HEK293 (cell line): ENCODE measurements at regions of chr12 and their contacts with region 1.

Region 1: GRCh38 chr12:8108808-8109398 is 14.5 kb upstream of the CLEC4A start:
- H3K4me3 ChIP-seq: no peak overlapping the region
- H3K27ac ChIP-seq: no peak overlapping the region
- H3K4me1 ChIP-seq: no peaks in the 10 kb centered on the region
- CTCF ChIP-seq: peak; percentile 78

Region 2: GRCh38 chr12:8088574-8088973 is 20.3 kb before region 1 on chr12:
- CTCF ChIA-PET with region 1: interaction called, 13 read pairs
- POLR2A ChIA-PET with region 1: no interaction called
- H3K4me3 ChIP-seq: no peak overlapping the region
- H3K27ac ChIP-seq: no peak overlapping the region
- H3K4me1 ChIP-seq: peaks cover 2% of the 10 kb centered on the region; the same call in 1 of the 2 replicates
- CTCF ChIP-seq: no peak

Region 3: GRCh38 chr12:8120072-8120713 is 11.3 kb after region 1 on chr12:
- CTCF ChIA-PET with region 1: interaction called, 35 read pairs
- POLR2A ChIA-PET with region 1: no interaction called
- H3K4me3 ChIP-seq: no peak overlapping the region
- H3K27ac ChIP-seq: no peak overlapping the region
- H3K4me1 ChIP-seq: no peaks in the 10 kb centered on the region
- CTCF ChIP-seq: no peak

Region 4: DNA sequence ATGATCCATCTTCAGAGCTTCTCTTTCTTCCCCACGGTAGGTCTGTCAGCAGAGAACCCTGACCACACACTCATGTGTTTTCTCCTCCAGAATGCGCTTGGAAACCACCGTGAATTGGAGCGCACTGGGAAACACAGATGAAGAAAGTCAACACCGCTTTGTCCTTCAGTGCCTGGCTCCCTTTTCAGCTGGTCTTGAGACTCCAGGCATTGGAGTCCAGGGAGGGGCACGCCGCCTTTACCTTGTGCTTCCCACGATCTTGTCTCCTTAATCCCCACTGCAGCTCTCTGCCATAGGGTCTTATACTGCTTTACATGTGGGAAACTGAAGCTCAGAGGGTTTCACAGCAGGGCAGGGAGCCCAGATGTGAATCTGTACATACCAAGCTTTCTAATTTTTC is 117.5 kb after region 1 on chr12:
- CTCF ChIA-PET with region 1: interaction called, 38 read pairs
- POLR2A ChIA-PET with region 1: no interaction called
- H3K4me3 ChIP-seq: no peak overlapping the region
- H3K27ac ChIP-seq: no peak overlapping the region
- H3K4me1 ChIP-seq: no peaks in the 10 kb centered on the region
- CTCF ChIP-seq: no peak